Activated CD8-positive, alpha-beta T cell treated with anti-CD3 and anti-CD28 coated beads, Interleukin-2, amount 10 ng/mL, durations not matched to agents 7 days and 5 days (primary cell): ENCODE measurements at regions of chr17 and their contacts with region 1.

Region 1: GRCh38 chr17:63946440-63947367 is 14.6 kb upstream of the CD79B start:
- DNase-seq: peak; percentile 72
- ATAC-seq: peak; percentile 86
- H3K4me3 Mint-ChIP-seq: peak overlapping the region; percentile 36
- H3K27ac Mint-ChIP-seq: peak overlapping the region; percentile 62
- H3K4me1 Mint-ChIP-seq: peaks cover 22% of the 10 kb centered on the region
- H3K27me3 Mint-ChIP-seq: peaks cover 30% of the 10 kb centered on the region

Region 2: GRCh38 chr17:63707151-63707550 is 239.6 kb before region 1 on chr17:
- CTCF ChIA-PET with region 1: no interaction called
- POLR2A ChIA-PET with region 1: no interaction called
- DNase-seq: no peak
- ATAC-seq: peak; percentile 4
- H3K4me3 Mint-ChIP-seq: peak overlapping the region; percentile 52
- H3K27ac Mint-ChIP-seq: peak overlapping the region; percentile 74
- H3K4me1 Mint-ChIP-seq: peaks cover 80% of the 10 kb centered on the region
- H3K27me3 Mint-ChIP-seq: no peaks in the 10 kb centered on the region

Region 3: GRCh38 chr17:63911657-63912426 is 34.9 kb before region 1 on chr17:
- CTCF ChIA-PET with region 1: interaction called, 68 read pairs
- POLR2A ChIA-PET with region 1: no interaction called
- DNase-seq: peak; percentile 74
- ATAC-seq: peak; percentile 72
- H3K4me3 Mint-ChIP-seq: no peak overlapping the region
- H3K27ac Mint-ChIP-seq: no peak overlapping the region
- H3K4me1 Mint-ChIP-seq: no peaks in the 10 kb centered on the region
- H3K27me3 Mint-ChIP-seq: peaks cover 15% of the 10 kb centered on the region

Region 4: GRCh38 chr17:63931099-63931561 is 15.6 kb before region 1 on chr17:
- CTCF ChIA-PET with region 1: interaction called, 59 read pairs
- POLR2A ChIA-PET with region 1: interaction called, 12 read pairs
- DNase-seq: peak; percentile 75
- ATAC-seq: peak; percentile 80
- H3K4me3 Mint-ChIP-seq: peak overlapping the region; percentile 93
- H3K27ac Mint-ChIP-seq: peak overlapping the region; percentile 82
- H3K4me1 Mint-ChIP-seq: peaks cover 29% of the 10 kb centered on the region
- H3K27me3 Mint-ChIP-seq: peaks cover 10% of the 10 kb centered on the region

Region 5: DNA sequence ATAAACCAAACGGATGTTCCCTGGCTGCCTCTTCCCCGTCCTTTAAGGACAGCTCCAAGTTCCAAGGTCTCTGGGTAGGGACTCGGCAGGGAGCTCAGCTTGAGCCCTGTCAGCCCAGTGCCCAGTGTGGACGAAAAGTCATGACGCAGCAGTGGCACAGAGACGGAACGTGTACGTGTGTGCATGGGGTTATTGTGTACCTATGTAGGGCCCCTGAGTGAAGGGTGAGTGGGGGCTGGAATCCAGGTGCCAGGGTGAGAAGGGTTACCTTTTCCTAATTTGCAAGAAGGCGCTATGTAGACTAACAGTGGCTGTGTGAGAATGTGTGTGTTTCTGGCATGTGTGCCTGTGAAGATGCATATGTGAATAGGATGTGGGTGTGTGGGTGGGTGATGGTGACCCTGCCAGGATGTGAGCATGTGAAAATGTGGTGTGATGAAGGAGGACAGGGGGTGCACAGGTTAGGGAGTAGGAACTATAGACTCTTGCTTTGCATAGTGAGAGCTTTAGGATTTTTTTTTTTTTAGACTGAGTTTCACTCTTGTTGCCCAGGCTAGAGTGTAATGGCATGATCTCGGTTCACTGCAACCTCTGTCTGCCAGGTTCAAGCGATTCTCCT is 20.1 kb after region 1 on chr17:
- CTCF ChIA-PET with region 1: interaction called, 19 read pairs
- POLR2A ChIA-PET with region 1: interaction called, 3 read pairs
- DNase-seq: peak; percentile 76
- ATAC-seq: peak; percentile 70
- H3K4me3 Mint-ChIP-seq: no peak overlapping the region
- H3K27ac Mint-ChIP-seq: peak overlapping the region; percentile 16
- H3K4me1 Mint-ChIP-seq: peaks cover 22% of the 10 kb centered on the region
- H3K27me3 Mint-ChIP-seq: peaks cover 5% of the 10 kb centered on the region

Region 6: DNA sequence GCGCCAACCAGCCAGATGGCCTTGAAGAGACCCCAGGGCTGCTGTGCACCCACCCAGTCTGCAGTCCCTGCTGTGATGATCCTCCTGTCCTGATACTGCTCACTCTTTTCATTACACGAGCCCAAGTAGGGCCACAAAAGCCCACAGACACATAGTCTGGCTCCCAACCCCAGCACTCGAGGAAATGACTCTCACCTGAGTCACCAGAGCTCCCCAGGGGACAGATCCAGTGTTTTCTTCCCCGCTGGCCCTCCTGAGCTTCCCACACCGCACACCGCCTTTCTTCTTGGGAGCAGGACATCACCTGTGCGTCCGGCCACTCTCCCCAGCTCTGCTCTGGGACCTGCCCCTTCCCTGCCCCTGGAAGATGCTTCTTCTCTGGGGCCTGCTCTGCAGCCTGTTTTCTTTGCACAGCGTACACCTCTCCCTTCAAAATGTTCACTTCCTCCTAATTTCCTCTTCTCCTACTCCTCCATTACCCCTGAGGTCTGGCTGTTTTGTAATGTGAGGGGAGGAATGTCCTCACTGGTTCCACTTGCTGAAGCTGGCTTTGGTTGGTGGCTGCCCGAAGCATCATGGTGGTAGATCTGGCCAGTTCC is 28.0 kb after region 1 on chr17:
- CTCF ChIA-PET with region 1: interaction called, 23 read pairs
- POLR2A ChIA-PET with region 1: no interaction called
- DNase-seq: no peak
- ATAC-seq: no peak
- H3K4me3 Mint-ChIP-seq: no peak overlapping the region
- H3K27ac Mint-ChIP-seq: no peak overlapping the region
- H3K4me1 Mint-ChIP-seq: peaks cover 8% of the 10 kb centered on the region
- H3K27me3 Mint-ChIP-seq: peaks cover 17% of the 10 kb centered on the region

Region 7: GRCh38 chr17:63984651-63985386 is 38.1 kb after region 1 on chr17:
- CTCF ChIA-PET with region 1: interaction called, 21 read pairs
- POLR2A ChIA-PET with region 1: no interaction called
- DNase-seq: peak; percentile 84
- ATAC-seq: peak; percentile 84
- H3K4me3 Mint-ChIP-seq: no peak overlapping the region
- H3K27ac Mint-ChIP-seq: peak overlapping the region; percentile 66
- H3K4me1 Mint-ChIP-seq: peaks cover 23% of the 10 kb centered on the region
- H3K27me3 Mint-ChIP-seq: peaks cover 2% of the 10 kb centered on the region

Region 8: GRCh38 chr17:64020056-64020766 is 73.5 kb after region 1 on chr17 and contains the start of gene ICAM2:
- CTCF ChIA-PET with region 1: interaction called, 28 read pairs
- POLR2A ChIA-PET with region 1: interaction called, 8 read pairs
- DNase-seq: peak; percentile 96
- ATAC-seq: peak; percentile 78
- H3K4me3 Mint-ChIP-seq: peak within 1 kb of the TSS; percentile 96
- H3K27ac Mint-ChIP-seq: peak within 1 kb of the TSS; percentile 100
- H3K4me1 Mint-ChIP-seq: peaks cover 75% of the 10 kb centered on the region
- H3K27me3 Mint-ChIP-seq: no peaks in the 10 kb centered on the region
- total RNA-seq, gene ICAM2: 48.4 to 51.3 TPM